ENCODE measurements at regions of chr18 and their contacts with region 1.

Region 1: GRCh38 chr18:21997207-21998143 is 171.9 kb upstream of the GATA6 start:
- DNase-seq: peak in 1 of 2 experiments; percentile 39
- H3K4me3 ChIP-seq: no peak overlapping the region
- H3K27ac ChIP-seq: no peak overlapping the region
- H3K4me1 ChIP-seq: no peaks in the 10 kb centered on the region
- H3K27me3 ChIP-seq: no peaks in the 10 kb centered on the region
- CTCF ChIP-seq: peak; percentile 78

Region 2: DNA sequence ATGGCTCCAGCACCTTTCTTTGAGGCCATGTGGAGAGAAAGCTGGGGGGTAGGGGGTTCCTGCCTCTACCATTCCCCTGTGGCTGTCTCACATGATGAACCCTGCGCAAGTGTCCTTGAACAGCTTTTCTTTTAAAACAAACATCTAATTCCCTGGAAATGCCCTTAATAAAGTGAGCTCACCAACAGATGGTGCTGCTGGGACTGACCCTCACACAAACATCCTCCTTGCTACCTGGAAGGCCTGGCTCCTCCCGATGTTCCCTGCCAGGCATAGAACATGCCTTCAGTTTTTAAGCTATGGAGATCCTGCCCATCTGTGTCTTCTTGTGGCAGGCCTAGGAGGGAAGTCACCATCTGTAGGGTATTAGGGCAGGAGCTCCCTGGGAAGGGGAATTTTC is 111.2 kb after region 1 on chr18:
- CTCF ChIA-PET with region 1: no interaction called
- POLR2A ChIA-PET with region 1: no interaction called
- intact Hi-C with region 1: loop called (anchors 10 kb)
- DNase-seq: peak; percentile 4 to 34
- H3K4me3 ChIP-seq: no peak overlapping the region
- H3K27ac ChIP-seq: no peak overlapping the region
- H3K4me1 ChIP-seq: peaks cover 20% of the 10 kb centered on the region
- H3K27me3 ChIP-seq: no peaks in the 10 kb centered on the region
- CTCF ChIP-seq: no peak; the same call in 1 of the 2 replicates

Measured in PC-9 (cell line).